Activated naive CD8-positive, alpha-beta T cell treated with anti-CD3 and anti-CD28 coated beads, Interleukin-2, amount 10 ng/mL, durations not matched to agents 7 days and 5 days (primary cell): ENCODE measurements at regions of chr5 and their contacts with region 1.

Region 1: GRCh38 chr5:41924872-41925554 is at the start of gene FBXO4:
- DNase-seq: peak; percentile 91
- ATAC-seq: peak; percentile 98
- H3K4me3 Mint-ChIP-seq: peak within 1 kb of the TSS; percentile 90
- H3K27ac Mint-ChIP-seq: peak within 1 kb of the TSS; percentile 93
- H3K4me1 Mint-ChIP-seq: peaks cover 12% of the 10 kb centered on the region
- H3K27me3 Mint-ChIP-seq: no peaks in the 10 kb centered on the region
- total RNA-seq, gene FBXO4: 13.0 to 15.3 TPM

Region 2: GRCh38 chr5:41869739-41870626 is 55.0 kb before region 1 on chr5 and contains the start of gene OXCT1:
- POLR2A ChIA-PET with region 1: interaction called, 11 read pairs
- DNase-seq: peak; percentile 92
- ATAC-seq: peak; percentile 94
- H3K4me3 Mint-ChIP-seq: peak within 1 kb of the TSS; percentile 92
- H3K27ac Mint-ChIP-seq: peak within 1 kb of the TSS; percentile 88
- H3K4me1 Mint-ChIP-seq: peaks cover 39% of the 10 kb centered on the region
- H3K27me3 Mint-ChIP-seq: no peaks in the 10 kb centered on the region
- total RNA-seq, gene OXCT1: 54.0 to 59.9 TPM